BJ (cell line): ENCODE measurements at regions of chr20 and their contacts with region 1.

Region 1: DNA sequence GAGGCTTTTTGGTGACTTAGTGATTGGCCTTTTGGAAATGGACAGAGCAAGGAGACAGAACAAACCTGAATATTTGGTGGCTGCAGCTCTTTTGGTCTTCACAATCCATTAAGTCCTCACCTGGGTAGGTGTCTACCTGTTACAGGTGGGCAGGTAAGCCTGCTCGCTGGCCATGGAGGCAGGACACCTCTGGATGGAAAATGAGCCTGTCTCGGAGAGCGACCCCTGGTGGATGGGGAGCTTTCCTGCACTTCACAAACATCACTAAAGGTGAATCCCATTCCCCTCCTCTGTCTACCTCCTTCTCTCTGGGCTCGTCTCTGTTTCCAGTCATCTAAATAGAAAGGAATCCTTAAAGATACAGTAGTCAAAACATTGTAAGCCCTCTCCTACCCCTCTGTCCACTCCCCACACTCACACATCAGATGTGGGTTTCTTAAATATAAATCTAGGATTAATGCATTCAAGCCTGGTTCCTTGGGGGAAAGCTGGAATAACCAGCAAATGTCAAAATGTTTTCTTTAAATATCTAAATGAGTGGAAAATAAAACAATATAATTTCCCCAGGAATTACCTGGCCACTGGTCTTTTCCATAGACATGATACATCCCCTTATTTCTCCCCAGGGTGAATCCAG is 304.9 kb downstream of the CDH26 start:
- DNase-seq: no peak
- H3K4me3 ChIP-seq: no peak overlapping the region
- H3K27me3 ChIP-seq: peaks cover 1% of the 10 kb centered on the region; the same call in 1 of the 2 replicates
- CTCF ChIP-seq: peak; percentile 80

Region 2: DNA sequence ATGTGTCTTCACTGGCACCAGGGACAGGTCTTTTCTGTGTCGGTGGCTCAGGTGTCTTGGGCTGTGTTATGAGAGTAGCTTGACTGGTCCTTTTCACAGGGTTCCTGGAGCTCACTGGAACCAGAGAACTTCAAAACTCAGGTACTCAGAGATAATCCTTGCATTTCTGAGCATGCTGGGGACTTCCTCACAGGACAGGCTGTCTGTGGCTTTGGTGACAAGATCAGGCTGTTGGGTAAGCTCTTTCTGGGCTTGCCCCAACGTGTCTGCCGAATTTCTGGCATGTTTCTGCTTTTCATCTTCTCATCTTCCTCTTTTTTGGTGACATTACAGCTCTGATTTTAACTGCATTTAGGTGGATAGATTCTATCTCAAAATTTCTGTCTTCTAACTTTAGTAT is 34.8 kb before region 1 on chr20:
- CTCF ChIA-PET with region 1: interaction called, 12 read pairs
- POLR2A ChIA-PET with region 1: no interaction called
- DNase-seq: no peak
- H3K4me3 ChIP-seq: no peak overlapping the region
- H3K27me3 ChIP-seq: no peaks in the 10 kb centered on the region
- CTCF ChIP-seq: no peak

Region 3: GRCh38 chr20:60249436-60249835 is 13.6 kb before region 1 on chr20:
- CTCF ChIA-PET with region 1: interaction called, 13 read pairs
- POLR2A ChIA-PET with region 1: no interaction called
- DNase-seq: peak; percentile 75
- H3K4me3 ChIP-seq: no peak overlapping the region
- H3K27me3 ChIP-seq: no peaks in the 10 kb centered on the region
- CTCF ChIP-seq: no peak

Region 4: GRCh38 chr20:60310560-60311349 is 47.7 kb after region 1 on chr20:
- CTCF ChIA-PET with region 1: no interaction called
- POLR2A ChIA-PET with region 1: no interaction called
- DNase-seq: no peak
- H3K4me3 ChIP-seq: no peak overlapping the region
- H3K27me3 ChIP-seq: no peaks in the 10 kb centered on the region
- CTCF ChIP-seq: no peak